ENCODE measurements at regions of chr6 and their contacts with region 1.

Region 1: GRCh38 chr6:33276864-33277662 is at the start of gene B3GALT4:
- DNase-seq: no peak
- ATAC-seq: peak; percentile 10
- H3K4me3 ChIP-seq: no peak within 1 kb of the TSS
- H3K27ac ChIP-seq: no peak within 1 kb of the TSS
- H3K4me1 ChIP-seq: peaks cover 31% of the 10 kb centered on the region
- H3K27me3 ChIP-seq: no peaks in the 10 kb centered on the region; a peak in 1 of 5 replicates
- CTCF ChIP-seq: no peak; the same call in 1 of the 2 replicates
- EP300 ChIP-seq: no peak
- POLR2A ChIP-seq: peak; percentile 23 to 55; a peak in 3 of 4 replicates
- RAD21 ChIP-seq: peak; percentile 66
- total RNA-seq, gene B3GALT4: 0.27 TPM in 1 of 2 replicates, not detected in the other

Region 2: DNA sequence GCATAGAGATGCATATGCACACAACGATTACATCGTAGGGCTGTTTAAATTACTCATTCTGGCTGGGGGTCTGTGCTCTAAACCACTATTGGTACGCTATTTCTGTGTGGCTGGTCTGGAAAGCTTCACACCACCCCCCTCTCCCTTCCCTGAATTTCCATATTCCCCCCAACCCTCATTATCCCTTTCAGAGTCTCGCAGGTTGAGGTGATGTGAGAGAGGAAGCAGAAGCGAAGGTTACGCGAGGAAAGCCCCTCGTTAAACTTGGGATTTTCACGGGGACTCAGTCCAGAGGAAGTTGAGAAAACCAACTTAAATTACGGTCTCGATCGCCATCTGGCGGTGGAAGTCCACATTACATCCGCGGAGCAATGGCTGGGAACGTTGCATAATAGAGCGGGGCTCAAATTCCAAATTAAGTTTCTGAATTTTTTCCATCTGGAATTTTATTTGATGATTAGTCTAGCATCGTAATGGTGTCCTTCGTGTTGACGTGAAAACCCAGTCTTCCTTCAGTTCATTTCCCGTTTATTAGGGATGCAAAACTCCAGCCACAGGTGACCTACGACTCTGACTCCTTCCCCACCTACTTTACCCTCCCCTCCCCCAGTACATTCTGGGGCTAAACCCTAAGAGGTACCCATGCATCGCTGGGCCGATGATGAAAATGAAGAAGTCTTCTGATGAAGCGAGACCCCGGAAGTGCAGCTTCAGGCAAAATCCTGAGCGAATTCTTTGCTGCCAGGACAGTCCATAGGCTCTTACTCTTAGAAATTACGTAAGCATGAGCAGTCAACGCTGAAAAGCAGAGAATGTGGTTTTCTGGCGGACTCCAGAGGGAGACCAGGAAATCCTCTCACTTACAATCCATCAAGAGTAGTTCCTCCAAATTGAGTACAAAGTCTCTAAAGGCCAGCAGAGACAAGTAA is 480.0 kb before region 1 on chr6:
- CTCF ChIA-PET with region 1: no interaction called
- POLR2A ChIA-PET with region 1: no interaction called
- in situ Hi-C with region 1: no loop called
- intact Hi-C with region 1: no loop called
- DNase-seq: peak; percentile 57
- ATAC-seq: peak; percentile 77
- H3K4me3 ChIP-seq: peak overlapping the region in 2 of 3 experiments; percentile 23 to 48; a peak in 3 of 6 replicates
- H3K27ac ChIP-seq: no peak overlapping the region
- H3K4me1 ChIP-seq: peaks cover 15% of the 10 kb centered on the region
- H3K27me3 ChIP-seq: peaks cover 0 to 40% of the 10 kb centered on the region in 2 experiments; a peak in 3 of 5 replicates
- CTCF ChIP-seq: peak; percentile 88
- EP300 ChIP-seq: no peak
- POLR2A ChIP-seq: no peak
- RAD21 ChIP-seq: peak; percentile 76

Region 3: DNA sequence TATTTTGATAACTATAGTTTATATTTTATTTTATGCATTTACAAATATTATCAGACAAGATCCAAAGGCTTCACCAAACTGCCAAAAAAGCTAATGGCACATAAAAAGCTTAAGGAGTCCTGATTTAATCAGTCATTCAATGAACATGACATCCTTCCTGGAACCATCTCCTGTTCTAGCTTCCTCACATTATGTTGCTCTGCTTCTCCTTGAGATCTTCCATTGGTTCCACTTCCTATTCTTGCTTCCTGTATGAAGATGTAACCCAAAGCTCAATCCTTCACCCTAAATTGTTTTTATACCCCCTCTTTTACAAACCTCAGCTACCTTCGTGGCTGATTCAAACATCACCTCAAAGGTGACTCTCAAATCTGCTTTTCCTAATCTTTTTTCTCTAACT is 313.2 kb before region 1 on chr6:
- CTCF ChIA-PET with region 1: no interaction called
- POLR2A ChIA-PET with region 1: no interaction called
- in situ Hi-C with region 1: no loop called
- intact Hi-C with region 1: no loop called
- DNase-seq: no peak
- ATAC-seq: no peak
- H3K4me3 ChIP-seq: no peak overlapping the region
- H3K27ac ChIP-seq: no peak overlapping the region
- H3K4me1 ChIP-seq: peaks cover 25% of the 10 kb centered on the region
- H3K27me3 ChIP-seq: no peaks in the 10 kb centered on the region
- CTCF ChIP-seq: no peak
- EP300 ChIP-seq: no peak
- POLR2A ChIP-seq: no peak
- RAD21 ChIP-seq: no peak

Region 4: GRCh38 chr6:33128318-33128717 is 148.7 kb before region 1 on chr6:
- CTCF ChIA-PET with region 1: no interaction called
- POLR2A ChIA-PET with region 1: no interaction called
- in situ Hi-C with region 1: no loop called
- intact Hi-C with region 1: no loop called
- DNase-seq: no peak
- ATAC-seq: no peak
- H3K4me3 ChIP-seq: no peak overlapping the region
- H3K27ac ChIP-seq: no peak overlapping the region
- H3K4me1 ChIP-seq: peaks cover 14% of the 10 kb centered on the region
- H3K27me3 ChIP-seq: no peaks in the 10 kb centered on the region; a peak in 1 of 5 replicates
- CTCF ChIP-seq: no peak
- EP300 ChIP-seq: no peak
- POLR2A ChIP-seq: no peak
- RAD21 ChIP-seq: no peak

Region 5: GRCh38 chr6:33288921-33289748 is 12.1 kb after region 1 on chr6 and contains the starts of genes PFDN6 and WDR46:
- CTCF ChIA-PET with region 1: no interaction called
- POLR2A ChIA-PET with region 1: interaction called, 41 read pairs
- in situ Hi-C with region 1: no loop called
- intact Hi-C with region 1: no loop called
- DNase-seq: peak; percentile 95
- ATAC-seq: peak; percentile 97
- H3K4me3 ChIP-seq: peak within 1 kb of the TSS; percentile 73 to 96 (median 94)
- H3K27ac ChIP-seq: peak within 1 kb of the TSS; percentile 56
- H3K4me1 ChIP-seq: peaks cover 22% of the 10 kb centered on the region
- H3K27me3 ChIP-seq: no peaks in the 10 kb centered on the region; a peak in 1 of 5 replicates
- CTCF ChIP-seq: 0 out of 2 replicates have a peak, but pooled peaks have one; percentile 3
- EP300 ChIP-seq: no peak; a peak in 1 of 4 replicates
- POLR2A ChIP-seq: peak; percentile 71 to 72
- RAD21 ChIP-seq: no peak
- total RNA-seq, gene PFDN6: 87.0 and 118 TPM in 2 replicates
- total RNA-seq, gene WDR46: 99.9 and 105 TPM in 2 replicates

Region 6: GRCh38 chr6:33344701-33345697 is 67.9 kb after region 1 on chr6:
- CTCF ChIA-PET with region 1: interaction called, 37 read pairs
- POLR2A ChIA-PET with region 1: interaction called, 4 read pairs
- in situ Hi-C with region 1: no loop called
- intact Hi-C with region 1: loop called (anchors 1 kb)
- DNase-seq: peak; percentile 69
- ATAC-seq: peak; percentile 61
- H3K4me3 ChIP-seq: 0 out of 6 replicates have a peak overlapping the region, but pooled peaks of 1 of the 3 experiments have one; percentile 6
- H3K27ac ChIP-seq: no peak overlapping the region
- H3K4me1 ChIP-seq: peaks cover 5% of the 10 kb centered on the region; the same call in 1 of the 2 replicates
- H3K27me3 ChIP-seq: peaks cover 0 to 39% of the 10 kb centered on the region in 2 experiments; a peak in 2 of 5 replicates
- CTCF ChIP-seq: peak; percentile 83
- EP300 ChIP-seq: no peak
- POLR2A ChIP-seq: no peak
- RAD21 ChIP-seq: peak; percentile 59; the same call in 1 of the 2 replicates

Region 7: DNA sequence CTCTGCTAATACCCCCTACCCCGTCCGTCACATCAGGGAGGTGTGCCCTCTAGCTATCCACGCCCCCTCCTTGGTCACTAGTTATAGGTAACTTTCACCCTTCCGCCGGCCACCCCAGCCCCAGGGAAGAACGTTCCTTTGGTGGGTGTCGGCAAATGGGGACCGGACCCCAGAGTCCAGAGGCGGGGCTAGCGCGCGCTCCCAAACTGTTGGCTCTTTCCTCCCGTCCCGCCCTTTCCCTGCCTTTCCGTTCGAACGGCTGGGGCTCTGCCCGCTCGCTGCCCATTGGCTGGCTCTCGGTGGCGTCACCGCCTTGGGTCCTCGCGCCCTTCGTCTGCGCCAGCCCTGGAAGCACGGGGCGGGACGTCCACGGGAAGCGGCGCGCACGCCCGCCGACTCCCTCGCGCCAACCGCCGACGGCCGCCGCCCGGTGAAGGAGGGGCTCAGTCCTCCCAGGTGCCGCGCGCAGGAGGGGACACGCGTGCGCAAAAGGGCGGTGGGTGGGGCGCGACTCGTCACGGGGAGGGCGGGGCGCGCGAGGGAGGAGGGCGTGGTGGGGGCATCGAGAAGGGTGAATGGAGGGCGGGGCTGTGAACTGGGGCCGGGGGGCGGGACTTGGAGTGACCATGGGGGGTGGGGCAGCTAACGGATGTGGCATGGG is 133.1 kb after region 1 on chr6:
- CTCF ChIA-PET with region 1: interaction called, 13 read pairs
- POLR2A ChIA-PET with region 1: interaction called, 3 read pairs
- in situ Hi-C with region 1: loop called (anchors 25 kb)
- intact Hi-C with region 1: no loop called
- DNase-seq: peak; percentile 96
- ATAC-seq: peak; percentile 94
- H3K4me3 ChIP-seq: peak overlapping the region; percentile 45 to 86 (median 85); a peak in 5 of 6 replicates
- H3K27ac ChIP-seq: peak overlapping the region; percentile 85
- H3K4me1 ChIP-seq: peaks cover 25% of the 10 kb centered on the region
- H3K27me3 ChIP-seq: no peaks in the 10 kb centered on the region
- CTCF ChIP-seq: peak; percentile 33
- EP300 ChIP-seq: no peak
- POLR2A ChIP-seq: peak in 1 of 2 experiments; percentile 10; a peak in 1 of 4 replicates
- RAD21 ChIP-seq: peak; percentile 25; the same call in 1 of the 2 replicates

Region 8: GRCh38 chr6:34305982-34306708 is 1029.1 kb after region 1 on chr6:
- CTCF ChIA-PET with region 1: no interaction called
- POLR2A ChIA-PET with region 1: no interaction called
- in situ Hi-C with region 1: no loop called
- intact Hi-C with region 1: no loop called
- DNase-seq: peak; percentile 42
- ATAC-seq: no peak
- H3K4me3 ChIP-seq: no peak overlapping the region
- H3K27ac ChIP-seq: no peak overlapping the region
- H3K4me1 ChIP-seq: peaks cover 19% of the 10 kb centered on the region
- H3K27me3 ChIP-seq: no peaks in the 10 kb centered on the region
- CTCF ChIP-seq: no peak
- EP300 ChIP-seq: no peak
- POLR2A ChIP-seq: no peak
- RAD21 ChIP-seq: no peak